ENCODE measurements at regions of chr7 and their contacts with region 1.

Region 1: DNA sequence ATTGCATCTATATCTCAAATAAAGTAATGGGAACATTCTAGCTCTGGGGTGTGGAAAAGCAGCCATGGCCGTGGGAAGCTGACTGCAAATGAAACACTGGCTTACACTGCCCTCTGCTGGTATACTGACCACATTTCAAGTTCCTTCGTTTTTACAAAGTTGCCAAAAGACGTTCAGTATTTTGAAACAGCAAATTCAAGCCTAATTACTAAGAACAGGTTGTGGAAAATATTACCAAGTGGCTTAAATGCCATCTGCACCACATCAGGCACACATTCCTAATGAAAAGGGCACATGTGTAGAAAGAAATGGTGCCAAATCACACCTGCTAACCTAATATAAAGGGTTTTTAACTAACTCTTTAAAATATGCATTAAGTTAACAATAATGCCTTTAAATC is 83.9 kb downstream of the JAZF1 start:
- DNase-seq: peak; percentile 33
- ATAC-seq: no peak
- H3K4me3 Mint-ChIP-seq: no peak overlapping the region
- H3K27ac Mint-ChIP-seq: no peak overlapping the region
- H3K4me1 Mint-ChIP-seq: peaks cover 46% of the 10 kb centered on the region
- H3K27me3 Mint-ChIP-seq: no peaks in the 10 kb centered on the region
- CTCF ChIP-seq: peak; percentile 77

Region 2: GRCh38 chr7:27196287-27196767 is 900.4 kb before region 1 on chr7:
- CTCF ChIA-PET with region 1: interaction called, 17 read pairs
- POLR2A ChIA-PET with region 1: no interaction called
- DNase-seq: peak; percentile 90
- ATAC-seq: no peak
- H3K4me3 Mint-ChIP-seq: no peak overlapping the region
- H3K27ac Mint-ChIP-seq: no peak overlapping the region
- H3K4me1 Mint-ChIP-seq: peaks cover 17% of the 10 kb centered on the region
- H3K27me3 Mint-ChIP-seq: peaks cover 96% of the 10 kb centered on the region
- CTCF ChIP-seq: peak; percentile 55

Region 3: DNA sequence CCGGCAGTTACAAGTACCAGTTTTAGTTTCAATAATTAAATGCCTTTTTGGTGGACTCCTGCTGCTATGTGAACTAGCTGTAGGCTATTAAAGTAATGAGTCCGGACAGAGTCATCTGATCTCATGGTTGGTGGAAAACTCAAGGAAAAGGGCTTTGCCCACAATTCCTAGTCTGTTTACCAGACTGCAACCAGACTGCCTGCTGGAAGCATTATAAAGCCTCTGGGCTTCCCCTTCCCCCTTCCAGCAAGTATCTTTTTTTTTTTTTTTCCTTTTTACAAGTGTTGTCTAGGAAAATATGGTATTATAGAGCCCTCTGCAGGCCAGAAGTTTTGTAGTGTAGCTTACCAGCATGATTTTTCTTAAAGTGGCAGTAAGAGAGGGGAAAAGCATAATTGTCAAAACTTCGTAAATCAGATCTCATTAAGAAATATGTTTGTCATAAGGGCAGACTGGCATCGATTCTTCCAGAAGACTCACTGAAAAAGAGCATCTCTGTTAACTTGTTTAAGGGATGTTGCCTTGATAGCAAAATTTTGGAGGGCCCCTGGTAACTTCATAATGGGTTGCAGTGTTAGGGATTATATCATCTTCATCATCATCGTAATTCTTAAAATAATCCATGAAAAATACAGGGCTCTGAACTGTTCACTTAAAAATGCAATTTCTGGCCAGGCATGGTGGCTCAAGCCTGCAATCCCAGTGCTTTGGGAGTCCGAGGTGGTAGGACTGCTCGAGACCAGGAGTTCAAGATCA is 175.5 kb before region 1 on chr7:
- CTCF ChIA-PET with region 1: interaction called, 12 read pairs
- POLR2A ChIA-PET with region 1: no interaction called
- DNase-seq: no peak
- ATAC-seq: peak; percentile 82
- H3K4me3 Mint-ChIP-seq: 0 out of 2 replicates have a peak overlapping the region, but pooled peaks have one; percentile 20
- H3K27ac Mint-ChIP-seq: peak overlapping the region; percentile 82
- H3K4me1 Mint-ChIP-seq: peaks cover 47% of the 10 kb centered on the region
- H3K27me3 Mint-ChIP-seq: no peaks in the 10 kb centered on the region; the same call in 1 of the 2 replicates
- CTCF ChIP-seq: no peak

Region 4: GRCh38 chr7:28037220-28038010 is 59.3 kb before region 1 on chr7:
- CTCF ChIA-PET with region 1: interaction called, 31 read pairs
- POLR2A ChIA-PET with region 1: no interaction called
- DNase-seq: no peak
- ATAC-seq: no peak
- H3K4me3 Mint-ChIP-seq: no peak overlapping the region
- H3K27ac Mint-ChIP-seq: no peak overlapping the region
- H3K4me1 Mint-ChIP-seq: peaks cover 32% of the 10 kb centered on the region
- H3K27me3 Mint-ChIP-seq: no peaks in the 10 kb centered on the region; the same call in 1 of the 2 replicates
- CTCF ChIP-seq: no peak

Region 5: GRCh38 chr7:28052933-28053332 is 43.8 kb before region 1 on chr7:
- CTCF ChIA-PET with region 1: interaction called, 33 read pairs
- POLR2A ChIA-PET with region 1: no interaction called
- DNase-seq: no peak
- ATAC-seq: no peak
- H3K4me3 Mint-ChIP-seq: no peak overlapping the region
- H3K27ac Mint-ChIP-seq: no peak overlapping the region
- H3K4me1 Mint-ChIP-seq: peaks cover 45% of the 10 kb centered on the region
- H3K27me3 Mint-ChIP-seq: no peaks in the 10 kb centered on the region; the same call in 1 of the 2 replicates
- CTCF ChIP-seq: no peak

Region 6: GRCh38 chr7:28078036-28078901 is 18.4 kb before region 1 on chr7:
- CTCF ChIA-PET with region 1: interaction called, 307 read pairs
- POLR2A ChIA-PET with region 1: no interaction called
- DNase-seq: peak; percentile 33
- ATAC-seq: no peak
- H3K4me3 Mint-ChIP-seq: no peak overlapping the region
- H3K27ac Mint-ChIP-seq: no peak overlapping the region
- H3K4me1 Mint-ChIP-seq: peaks cover 30% of the 10 kb centered on the region
- H3K27me3 Mint-ChIP-seq: no peaks in the 10 kb centered on the region
- CTCF ChIP-seq: peak; percentile 96

Region 7: GRCh38 chr7:28121496-28121895 is 24.8 kb after region 1 on chr7:
- CTCF ChIA-PET with region 1: interaction called, 13 read pairs
- POLR2A ChIA-PET with region 1: no interaction called
- DNase-seq: no peak
- ATAC-seq: no peak
- H3K4me3 Mint-ChIP-seq: no peak overlapping the region
- H3K27ac Mint-ChIP-seq: no peak overlapping the region
- H3K4me1 Mint-ChIP-seq: peaks cover 34% of the 10 kb centered on the region
- H3K27me3 Mint-ChIP-seq: peaks cover 37% of the 10 kb centered on the region
- CTCF ChIP-seq: no peak

Measured in WTC11 (cell line).